Gastrocnemius medialis (tissue), 4 donors: ENCODE measurements at regions of chr18 and their contacts with region 1.

Region 1: GRCh38 chr18:8982416-8983184 is 119.9 kb upstream of the NDUFV2 start:
- DNase-seq: no peak
- ATAC-seq: peak in 1 of 2 donors; percentile 60
- H3K4me3 ChIP-seq: no peak overlapping the region
- H3K27ac ChIP-seq: no peak overlapping the region
- H3K4me1 ChIP-seq: no peaks in the 10 kb centered on the region
- H3K27me3 ChIP-seq: no peaks in the 10 kb centered on the region
- CTCF ChIP-seq: peak in 2 of 5 experiments; percentile 5 to 23
- POLR2A ChIP-seq: no peak

Region 2: GRCh38 chr18:8478166-8478967 is 504.2 kb before region 1 on chr18:
- in situ Hi-C with region 1: loop called in 1 of 4 experiments (anchors 25 kb)
- intact Hi-C with region 1: loop called (anchors 5 kb)
- DNase-seq: peak; percentile 29 to 36
- ATAC-seq: peak; percentile 67 to 84
- H3K4me3 ChIP-seq: no peak overlapping the region
- H3K27ac ChIP-seq: no peak overlapping the region
- H3K4me1 ChIP-seq: no peaks in the 10 kb centered on the region
- H3K27me3 ChIP-seq: no peaks in the 10 kb centered on the region
- CTCF ChIP-seq: peak; percentile 50 to 83 (median 76)
- POLR2A ChIP-seq: no peak

Region 3: GRCh38 chr18:8696749-8697211 is 285.8 kb before region 1 on chr18:
- in situ Hi-C with region 1: loop called in 3 of 4 experiments (anchors 5 to 10 kb)
- intact Hi-C with region 1: no loop called
- DNase-seq: peak; percentile 43 to 73
- ATAC-seq: peak; percentile 90 to 98
- H3K4me3 ChIP-seq: no peak overlapping the region
- H3K27ac ChIP-seq: no peak overlapping the region
- H3K4me1 ChIP-seq: no peaks in the 10 kb centered on the region
- H3K27me3 ChIP-seq: no peaks in the 10 kb centered on the region
- CTCF ChIP-seq: peak; percentile 66 to 94 (median 87)
- POLR2A ChIP-seq: no peak